ENCODE measurements at regions of chr9 and their contacts with region 1.

Region 1: DNA sequence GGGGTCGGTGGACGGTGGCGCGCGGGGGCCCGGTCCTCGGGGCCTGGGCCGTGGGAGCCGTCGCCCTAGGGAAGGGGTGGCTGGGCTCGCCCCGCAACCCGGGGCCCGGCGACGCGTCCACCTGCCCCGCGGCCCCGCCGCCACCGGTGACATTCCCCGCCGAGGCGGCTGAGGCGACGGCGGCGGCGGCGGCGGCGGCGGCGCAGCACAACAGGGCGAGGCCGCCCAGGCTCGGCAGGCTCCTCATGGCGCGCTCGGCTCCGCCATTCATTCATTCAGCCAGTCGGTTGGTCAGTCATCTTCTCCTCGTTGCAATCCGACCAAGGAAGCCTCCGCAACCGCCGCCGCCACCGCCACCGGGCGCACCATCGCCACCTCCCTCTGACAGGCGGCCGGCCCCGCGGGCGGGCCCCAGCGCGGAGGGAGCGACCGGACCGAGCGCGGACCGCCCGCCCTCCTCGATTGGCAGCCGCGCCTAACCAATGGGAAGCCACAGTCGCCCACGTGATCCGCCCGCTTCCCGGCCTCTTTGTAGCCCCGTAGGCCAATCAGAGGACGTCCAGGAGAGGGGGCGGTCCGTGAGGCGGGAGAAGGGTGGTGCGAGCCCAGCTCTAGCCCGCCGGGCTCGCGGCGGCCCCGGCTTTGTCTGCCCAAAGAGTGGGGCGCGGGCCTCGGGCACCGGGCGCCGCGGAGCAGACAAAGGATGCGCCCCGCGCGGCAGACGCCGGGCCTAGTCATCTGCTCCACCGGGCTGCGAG is at the start of gene MEGF9:
- DNase-seq: peak; percentile 95 to 97 (median 96)
- H3K4me3 ChIP-seq: peak within 1 kb of the TSS; percentile 87 to 99 (median 98)
- H3K4me3 Mint-ChIP-seq: peak within 1 kb of the TSS; percentile 96 to 98
- H3K27ac ChIP-seq: peak within 1 kb of the TSS; percentile 82 to 91
- H3K27ac Mint-ChIP-seq: peak within 1 kb of the TSS; percentile 87 to 97 (median 95)
- H3K4me1 ChIP-seq: peaks cover 33 to 51% of the 10 kb centered on the region in 2 donors
- H3K4me1 Mint-ChIP-seq: peaks cover 52% of the 10 kb centered on the region
- H3K27me3 ChIP-seq: no peaks in the 10 kb centered on the region
- H3K27me3 Mint-ChIP-seq: no peaks in the 10 kb centered on the region
- CTCF ChIP-seq: no peak
- polyA plus RNA-seq, gene MEGF9: 45.0 to 92.8 (median 89.7) TPM

Region 2: GRCh38 chr9:120242116-120242811 is 472.0 kb before region 1 on chr9:
- intact Hi-C with region 1: no loop called
- DNase-seq: no peak
- H3K4me3 ChIP-seq: no peak overlapping the region
- H3K4me3 Mint-ChIP-seq: no peak overlapping the region
- H3K27ac ChIP-seq: no peak overlapping the region
- H3K27ac Mint-ChIP-seq: no peak overlapping the region
- H3K4me1 ChIP-seq: no peaks in the 10 kb centered on the region
- H3K4me1 Mint-ChIP-seq: no peaks in the 10 kb centered on the region
- H3K27me3 ChIP-seq: no peaks in the 10 kb centered on the region
- H3K27me3 Mint-ChIP-seq: no peaks in the 10 kb centered on the region
- CTCF ChIP-seq: no peak

Region 3: GRCh38 chr9:120668399-120668798 is 45.9 kb before region 1 on chr9:
- intact Hi-C with region 1: loop called (anchors 5 to 10 kb)
- DNase-seq: no peak
- H3K4me3 ChIP-seq: no peak overlapping the region
- H3K4me3 Mint-ChIP-seq: no peak overlapping the region
- H3K27ac ChIP-seq: peak overlapping the region in 1 of 2 donors; percentile 62
- H3K27ac Mint-ChIP-seq: peak overlapping the region in 5 of 7 donors; percentile 25 to 89 (median 38)
- H3K4me1 ChIP-seq: peaks cover 46 to 83% of the 10 kb centered on the region in 2 donors
- H3K4me1 Mint-ChIP-seq: peaks cover 84% of the 10 kb centered on the region
- H3K27me3 ChIP-seq: no peaks in the 10 kb centered on the region
- H3K27me3 Mint-ChIP-seq: no peaks in the 10 kb centered on the region
- CTCF ChIP-seq: no peak